CD14-positive monocyte (primary cell): ENCODE measurements at regions of chr4 and their contacts with region 1.

Region 1: DNA sequence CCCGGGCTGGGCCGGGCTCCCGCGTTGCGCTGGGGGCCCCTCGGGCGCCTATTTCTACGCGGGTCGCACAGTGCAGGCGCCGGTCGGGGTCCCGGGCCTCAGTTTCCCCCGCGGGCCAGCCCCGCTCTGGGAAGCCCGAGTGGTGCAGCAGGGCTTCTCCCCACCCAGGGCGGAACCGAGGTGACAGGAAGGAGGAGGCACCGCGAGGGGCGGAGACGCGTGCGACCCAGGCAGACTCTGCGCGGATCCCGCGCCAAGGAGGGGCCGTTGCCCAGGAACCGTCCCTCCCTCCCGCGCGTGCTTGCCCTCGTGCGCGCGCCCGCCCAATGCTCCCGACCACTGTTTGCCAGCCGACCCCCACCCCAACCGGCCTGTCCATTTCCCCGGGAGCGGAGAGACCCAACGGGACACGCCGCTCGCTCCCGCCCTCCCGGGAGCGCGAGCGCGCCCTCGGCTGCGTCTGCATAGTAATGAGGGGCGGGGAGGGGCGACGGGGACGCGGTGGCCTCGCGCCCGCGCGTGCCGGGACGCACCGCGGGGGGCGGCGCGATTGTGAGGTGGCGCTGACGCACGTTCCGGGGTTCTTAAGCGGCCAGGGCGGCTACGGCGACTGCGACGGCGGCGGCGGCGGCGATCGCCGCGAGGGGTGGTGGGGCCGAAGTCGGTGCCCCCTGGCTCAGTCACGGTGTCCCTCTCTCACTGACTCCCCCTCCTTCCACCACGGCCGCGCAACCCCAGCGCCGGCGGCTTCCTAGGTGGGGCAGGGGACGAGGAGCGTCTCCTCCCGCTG is at the start of gene CPEB2:
- DNase-seq: peak; percentile 87 to 92 (median 91)
- H3K4me3 ChIP-seq: peak within 1 kb of the TSS; percentile 70 to 98 (median 95)
- H3K4me3 Mint-ChIP-seq: peak within 1 kb of the TSS; percentile 90 to 93
- H3K27ac ChIP-seq: peak within 1 kb of the TSS; percentile 99 to 100
- H3K27ac Mint-ChIP-seq: peak within 1 kb of the TSS; percentile 95 to 98 (median 97)
- H3K4me1 ChIP-seq: peaks cover 8 to 18% of the 10 kb centered on the region in 2 donors
- H3K4me1 Mint-ChIP-seq: peaks cover 24% of the 10 kb centered on the region
- H3K27me3 ChIP-seq: no peaks in the 10 kb centered on the region
- H3K27me3 Mint-ChIP-seq: peaks cover 0 to 4% (median 0%) of the 10 kb centered on the region in 3 donors
- CTCF ChIP-seq: no peak
- polyA plus RNA-seq, gene CPEB2: 1.6 to 8.2 (median 1.7) TPM

Region 2: DNA sequence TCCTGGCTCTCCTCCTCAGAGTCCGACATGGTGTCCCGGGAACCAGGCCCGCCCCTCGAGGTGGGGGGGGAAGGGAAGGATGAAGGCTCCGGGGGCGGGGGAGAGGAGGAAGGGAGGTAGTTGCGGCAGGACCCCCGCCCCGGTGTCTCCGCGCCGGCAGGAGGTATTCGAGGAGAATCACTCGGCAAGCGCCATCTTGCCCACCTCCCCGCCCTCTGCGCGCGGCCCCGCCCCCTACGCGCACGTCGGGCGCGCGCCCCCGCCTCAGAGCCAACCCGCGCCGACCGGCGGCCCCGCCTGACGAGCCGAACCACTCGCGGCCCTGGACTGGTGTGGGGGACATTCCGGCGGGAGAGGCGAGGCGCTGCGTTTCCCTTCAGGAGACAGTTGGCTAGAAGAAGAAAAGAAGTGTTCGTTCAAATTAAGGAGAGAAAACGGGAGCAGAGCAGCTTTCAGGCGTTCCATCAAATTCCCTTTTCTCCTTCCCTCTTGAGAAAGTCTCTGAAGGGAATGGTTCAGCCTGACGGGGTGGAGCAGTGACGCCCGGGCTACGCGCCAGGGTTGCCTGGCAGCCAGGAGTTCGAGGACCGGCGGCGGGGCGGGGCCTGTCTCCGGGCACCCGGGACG is 1517.8 kb before region 1 on chr4 and contains the start of gene RAB28:
- intact Hi-C with region 1: loop called in 1 of 2 experiments (anchors 10 kb)
- DNase-seq: peak; percentile 89 to 90 (median 89)
- H3K4me3 ChIP-seq: peak within 1 kb of the TSS; percentile 78 to 86 (median 82)
- H3K4me3 Mint-ChIP-seq: peak within 1 kb of the TSS; percentile 87 to 96
- H3K27ac ChIP-seq: peak within 1 kb of the TSS; percentile 74 to 90
- H3K27ac Mint-ChIP-seq: peak within 1 kb of the TSS; percentile 94 to 100 (median 99)
- H3K4me1 ChIP-seq: peaks cover 18 to 30% of the 10 kb centered on the region in 2 donors
- H3K4me1 Mint-ChIP-seq: peaks cover 25% of the 10 kb centered on the region
- H3K27me3 ChIP-seq: peaks cover 23 to 33% of the 10 kb centered on the region in 2 donors
- H3K27me3 Mint-ChIP-seq: peaks cover 20 to 23% (median 21%) of the 10 kb centered on the region in 3 donors
- CTCF ChIP-seq: no peak
- polyA plus RNA-seq, gene RAB28: 7.6 to 18.0 (median 17.8) TPM

Region 3: DNA sequence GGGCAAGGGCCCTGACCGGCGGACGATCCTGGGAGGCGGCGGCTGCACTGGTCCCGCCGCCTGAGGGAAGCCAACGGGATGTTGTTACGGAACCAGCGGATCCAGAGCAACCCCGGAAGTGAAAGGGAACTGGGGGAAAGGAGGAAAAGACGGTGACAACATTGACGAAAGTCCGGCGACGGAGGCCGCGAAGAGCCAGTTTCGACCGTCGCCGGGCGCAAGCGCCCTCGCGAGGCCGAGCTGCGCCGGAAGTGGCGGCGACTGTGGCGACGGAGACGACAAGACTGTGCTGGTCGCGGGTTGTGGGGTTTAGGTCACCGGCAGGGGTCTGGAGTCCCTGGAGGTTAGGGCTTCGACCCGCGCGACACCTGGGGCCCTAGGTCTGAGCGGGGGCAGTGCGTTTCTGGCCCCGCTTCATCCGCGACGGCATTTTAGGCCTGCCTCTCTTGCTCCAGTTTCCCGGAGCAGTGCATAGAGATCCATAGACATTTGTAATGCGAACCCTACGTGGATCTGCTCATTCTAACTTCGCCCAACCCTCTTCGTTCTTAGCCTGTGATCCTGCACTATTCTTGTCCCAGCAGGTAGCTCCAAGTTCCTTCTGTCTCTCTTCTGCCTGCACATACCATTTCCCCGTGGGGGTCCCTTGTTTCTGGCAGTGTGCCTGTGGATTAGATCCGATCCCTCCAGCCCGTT is 1374.3 kb before region 1 on chr4 and contains the start of gene BOD1L1:
- intact Hi-C with region 1: loop called (anchors 10 kb)
- DNase-seq: peak; percentile 90 to 91 (median 90)
- H3K4me3 ChIP-seq: peak within 1 kb of the TSS; percentile 83 to 92 (median 89)
- H3K4me3 Mint-ChIP-seq: peak within 1 kb of the TSS; percentile 86 to 95
- H3K27ac ChIP-seq: peak within 1 kb of the TSS; percentile 72 to 91
- H3K27ac Mint-ChIP-seq: peak within 1 kb of the TSS; percentile 85 to 97 (median 94)
- H3K4me1 ChIP-seq: peaks cover 20 to 28% of the 10 kb centered on the region in 2 donors
- H3K4me1 Mint-ChIP-seq: peaks cover 34% of the 10 kb centered on the region
- H3K27me3 ChIP-seq: no peaks in the 10 kb centered on the region
- H3K27me3 Mint-ChIP-seq: peaks cover 0 to 8% (median 7%) of the 10 kb centered on the region in 3 donors
- CTCF ChIP-seq: peak; percentile 29
- polyA plus RNA-seq, gene BOD1L1: 0.72 to 26.7 (median 1.5) TPM

Region 4: DNA sequence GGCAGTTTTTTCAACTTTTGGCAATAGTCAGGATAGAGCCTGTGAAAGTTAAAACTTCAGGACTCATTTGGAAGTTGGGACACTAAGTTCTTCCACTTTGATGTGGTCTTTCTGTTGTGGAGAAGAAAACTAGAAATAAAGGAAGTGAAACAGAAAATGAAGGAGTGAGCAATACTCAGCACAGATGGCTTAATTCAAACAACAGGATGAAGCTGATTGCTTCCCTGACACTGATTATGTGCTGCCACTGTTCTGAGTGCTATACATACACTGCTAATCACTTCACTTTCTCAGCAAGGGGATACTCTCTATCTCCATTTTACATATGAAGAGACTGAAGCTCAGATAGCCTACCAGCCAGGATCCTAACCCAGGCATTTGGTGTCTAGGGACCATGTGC is 234.9 kb before region 1 on chr4:
- intact Hi-C with region 1: no loop called
- DNase-seq: peak; percentile 3 to 22 (median 21)
- H3K4me3 ChIP-seq: no peak overlapping the region
- H3K4me3 Mint-ChIP-seq: peak overlapping the region in 1 of 2 donors; percentile 41
- H3K27ac ChIP-seq: peak overlapping the region in 1 of 2 donors; percentile 10
- H3K27ac Mint-ChIP-seq: peak overlapping the region in 4 of 7 donors; percentile 3 to 56 (median 10)
- H3K4me1 ChIP-seq: peaks cover 7 to 18% of the 10 kb centered on the region in 2 donors
- H3K4me1 Mint-ChIP-seq: peaks cover 19% of the 10 kb centered on the region
- H3K27me3 ChIP-seq: no peaks in the 10 kb centered on the region
- H3K27me3 Mint-ChIP-seq: peaks cover 0 to 4% (median 0%) of the 10 kb centered on the region in 3 donors
- CTCF ChIP-seq: no peak

Region 5: DNA sequence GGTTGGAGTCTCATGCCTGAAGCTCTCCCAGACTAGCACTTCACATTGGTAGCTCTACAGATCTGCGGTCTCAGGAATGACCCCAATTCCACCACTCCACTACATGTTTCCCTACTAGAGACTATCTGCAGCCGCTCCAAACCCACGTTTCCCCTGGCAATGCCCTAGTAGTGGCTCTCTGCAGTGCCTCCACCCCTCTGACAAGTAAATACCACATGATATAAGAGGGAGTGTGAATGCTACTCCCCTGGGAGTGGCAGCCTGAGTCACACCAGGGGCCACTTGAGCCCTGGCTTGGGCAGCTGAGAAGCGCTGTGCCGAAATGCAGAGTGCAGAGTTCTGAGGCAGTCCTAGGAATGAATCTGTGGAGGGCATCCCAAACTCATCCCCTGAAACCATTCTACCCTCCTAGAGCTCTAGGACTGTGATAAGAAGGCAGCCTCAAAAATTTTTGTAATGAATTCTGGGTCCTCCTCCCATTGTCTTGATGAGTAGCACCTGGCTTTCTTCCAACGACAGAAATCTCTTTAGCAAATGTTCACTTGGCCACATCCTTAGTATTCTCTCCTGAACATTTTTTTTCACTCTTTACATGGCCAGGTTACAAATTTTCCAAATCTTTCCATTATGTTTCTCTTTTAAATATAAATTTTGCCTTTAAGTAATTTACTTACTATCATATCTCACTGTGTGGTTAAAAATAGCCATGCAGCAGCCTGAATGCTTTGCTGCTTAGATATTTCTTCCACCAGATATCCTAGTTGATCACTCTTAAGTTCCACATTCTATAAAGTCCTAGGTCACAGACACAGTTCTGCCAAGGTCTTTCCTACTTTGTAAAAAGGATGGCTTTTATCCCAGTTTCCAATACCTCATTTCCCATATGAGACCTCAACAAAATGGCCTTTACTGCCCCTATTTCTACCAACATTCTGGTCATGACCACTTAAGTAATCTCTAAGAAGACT is 160.0 kb before region 1 on chr4:
- intact Hi-C with region 1: no loop called
- DNase-seq: no peak
- H3K4me3 ChIP-seq: no peak overlapping the region
- H3K4me3 Mint-ChIP-seq: no peak overlapping the region
- H3K27ac ChIP-seq: no peak overlapping the region
- H3K27ac Mint-ChIP-seq: no peak overlapping the region
- H3K4me1 ChIP-seq: no peaks in the 10 kb centered on the region
- H3K4me1 Mint-ChIP-seq: no peaks in the 10 kb centered on the region
- H3K27me3 ChIP-seq: no peaks in the 10 kb centered on the region
- H3K27me3 Mint-ChIP-seq: peaks cover 0 to 2% (median 2%) of the 10 kb centered on the region in 3 donors
- CTCF ChIP-seq: no peak

Region 6: GRCh38 chr4:14856076-14856933 is 145.8 kb before region 1 on chr4:
- intact Hi-C with region 1: loop called (anchors 5 kb)
- DNase-seq: peak; percentile 92 to 98 (median 93)
- H3K4me3 ChIP-seq: no peak overlapping the region
- H3K4me3 Mint-ChIP-seq: no peak overlapping the region
- H3K27ac ChIP-seq: peak overlapping the region; percentile 75 to 90
- H3K27ac Mint-ChIP-seq: peak overlapping the region; percentile 86 to 97 (median 95)
- H3K4me1 ChIP-seq: peaks cover 31 to 33% of the 10 kb centered on the region in 2 donors
- H3K4me1 Mint-ChIP-seq: peaks cover 27% of the 10 kb centered on the region
- H3K27me3 ChIP-seq: peaks cover under 1 to 3% of the 10 kb centered on the region in 2 donors
- H3K27me3 Mint-ChIP-seq: peaks cover 0 to 11% (median 9%) of the 10 kb centered on the region in 3 donors
- CTCF ChIP-seq: no peak

Region 7: DNA sequence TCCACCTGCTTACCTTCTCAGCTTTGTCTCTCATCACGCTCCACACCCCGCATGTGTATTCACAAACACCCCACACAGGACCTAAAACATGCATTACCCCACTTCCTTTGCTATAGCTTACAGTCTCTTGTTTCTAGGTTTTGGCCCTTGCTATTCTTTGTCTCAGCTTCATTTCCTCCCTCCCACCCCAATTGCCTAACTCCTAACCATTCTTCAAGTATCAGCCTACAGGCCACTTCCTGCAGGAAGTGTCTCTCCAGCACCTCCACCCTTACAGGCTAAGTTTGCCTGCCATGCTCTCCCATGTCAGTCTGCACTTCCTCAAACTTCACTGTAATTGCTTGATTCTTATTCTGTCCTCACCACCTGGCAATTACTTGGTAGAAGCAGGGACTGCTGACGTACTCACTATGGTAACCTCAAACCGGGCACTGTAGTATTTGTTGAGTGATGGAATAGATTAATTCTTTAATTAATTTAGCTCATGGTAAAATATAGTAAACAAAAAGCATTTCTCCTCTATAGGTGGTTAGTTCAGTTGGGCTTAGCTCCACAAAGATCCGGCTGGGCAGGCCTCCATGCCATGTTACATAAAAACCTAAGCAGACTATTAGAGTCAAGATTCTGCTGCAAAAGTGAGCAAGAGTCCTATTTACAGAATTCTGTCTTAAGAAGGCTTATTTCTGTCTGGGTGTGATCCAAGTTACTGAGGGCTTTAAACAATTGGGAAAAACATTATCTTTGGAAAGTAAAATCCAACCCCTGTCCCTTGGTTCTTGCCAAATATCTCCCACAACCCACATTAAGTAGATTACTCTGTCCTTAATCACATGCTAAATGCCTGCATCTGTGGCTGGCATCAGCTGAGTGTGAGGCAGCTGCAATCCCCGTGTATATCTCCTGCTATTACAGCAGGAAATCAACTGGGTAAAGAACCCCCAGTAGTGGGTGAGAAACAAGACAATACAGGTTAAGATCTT is 124.5 kb before region 1 on chr4:
- intact Hi-C with region 1: loop called in 1 of 2 experiments (anchors 5 kb)
- DNase-seq: peak; percentile 76 to 87 (median 85)
- H3K4me3 ChIP-seq: peak overlapping the region in 1 of 3 experiments; percentile 36
- H3K4me3 Mint-ChIP-seq: peak overlapping the region; percentile 7 to 77
- H3K27ac ChIP-seq: peak overlapping the region in 1 of 2 donors; percentile 58
- H3K27ac Mint-ChIP-seq: peak overlapping the region; percentile 82 to 92 (median 90)
- H3K4me1 ChIP-seq: peaks cover 16 to 21% of the 10 kb centered on the region in 2 donors
- H3K4me1 Mint-ChIP-seq: peaks cover 30% of the 10 kb centered on the region
- H3K27me3 ChIP-seq: no peaks in the 10 kb centered on the region
- H3K27me3 Mint-ChIP-seq: peaks cover 0 to 3% (median 0%) of the 10 kb centered on the region in 3 donors
- CTCF ChIP-seq: no peak

Region 8: GRCh38 chr4:15655229-15656037 is 653.4 kb after region 1 on chr4 and contains the start of gene FBXL5:
- intact Hi-C with region 1: loop called in 1 of 2 experiments (anchors 5 kb)
- DNase-seq: peak; percentile 77 to 90 (median 86)
- H3K4me3 ChIP-seq: peak within 1 kb of the TSS; percentile 72 to 98 (median 95)
- H3K4me3 Mint-ChIP-seq: peak within 1 kb of the TSS; percentile 99 to 100
- H3K27ac ChIP-seq: peak within 1 kb of the TSS; percentile 97 to 100
- H3K27ac Mint-ChIP-seq: peak within 1 kb of the TSS; percentile 97 to 99 (median 99)
- H3K4me1 ChIP-seq: peaks cover 58 to 83% of the 10 kb centered on the region in 2 donors
- H3K4me1 Mint-ChIP-seq: peaks cover 64% of the 10 kb centered on the region
- H3K27me3 ChIP-seq: no peaks in the 10 kb centered on the region
- H3K27me3 Mint-ChIP-seq: no peaks in the 10 kb centered on the region
- CTCF ChIP-seq: no peak
- polyA plus RNA-seq, gene FBXL5: 172 to 518 (median 484) TPM

Region 9: DNA sequence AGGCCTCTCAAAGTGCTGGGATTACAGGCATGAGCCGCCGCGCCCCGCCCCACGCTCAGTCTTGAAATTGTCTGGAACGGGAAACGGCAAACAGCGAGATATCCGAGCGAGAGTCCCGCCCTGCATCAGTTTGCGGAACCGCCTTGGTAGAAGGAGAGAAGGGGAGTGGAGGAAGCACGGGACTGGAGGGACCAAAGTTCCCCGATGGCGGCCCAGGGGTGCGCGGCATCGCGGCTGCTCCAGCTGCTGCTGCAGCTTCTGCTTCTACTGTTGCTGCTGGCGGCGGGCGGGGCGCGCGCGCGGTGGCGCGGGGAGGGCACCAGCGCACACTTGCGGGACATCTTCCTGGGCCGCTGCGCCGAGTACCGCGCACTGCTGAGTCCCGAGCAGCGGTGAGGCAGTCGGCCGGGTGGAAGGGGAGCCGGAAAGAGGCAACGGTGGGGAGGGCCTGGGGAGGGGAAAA is 700.9 kb after region 1 on chr4 and contains the start of gene BST1:
- intact Hi-C with region 1: loop called in 1 of 2 experiments (anchors 10 kb)
- DNase-seq: peak; percentile 93 to 96 (median 94)
- H3K4me3 ChIP-seq: peak within 1 kb of the TSS; percentile 60 to 92 (median 63)
- H3K4me3 Mint-ChIP-seq: peak within 1 kb of the TSS; percentile 87 to 97
- H3K27ac ChIP-seq: peak within 1 kb of the TSS; percentile 70 to 87
- H3K27ac Mint-ChIP-seq: peak within 1 kb of the TSS; percentile 91 to 97 (median 94)
- H3K4me1 ChIP-seq: peaks cover 68 to 81% of the 10 kb centered on the region in 2 donors
- H3K4me1 Mint-ChIP-seq: peaks cover 88% of the 10 kb centered on the region
- H3K27me3 ChIP-seq: no peaks in the 10 kb centered on the region
- H3K27me3 Mint-ChIP-seq: peaks cover 0 to 1% (median 1%) of the 10 kb centered on the region in 3 donors
- CTCF ChIP-seq: no peak
- polyA plus RNA-seq, gene BST1: 140 to 297 (median 266) TPM